ENCODE measurements at regions of chr6 and their contacts with region 1.

Region 1: DNA sequence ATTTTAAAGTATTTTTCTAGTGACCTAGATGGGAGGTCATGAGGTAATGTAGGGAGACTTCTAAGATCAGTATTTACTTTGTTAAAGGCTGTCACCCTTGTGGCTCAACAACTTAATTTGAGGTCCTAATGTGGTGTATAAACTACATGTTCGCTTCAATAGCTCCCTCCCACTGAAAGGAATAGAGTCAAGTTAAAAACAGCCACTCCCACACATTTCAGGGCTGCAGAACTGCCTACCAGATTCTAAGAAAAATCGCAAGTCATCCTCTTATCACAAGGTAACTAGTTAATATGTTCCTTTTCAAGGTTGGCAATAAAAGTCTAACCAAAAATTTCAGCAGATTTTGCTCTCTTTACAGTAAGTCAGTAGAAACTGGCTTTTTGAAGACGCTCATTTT is 15.1 kb downstream of the GSTA1 start:
- DNase-seq: no peak
- ATAC-seq: no peak
- H3K4me3 ChIP-seq: no peak overlapping the region
- H3K27ac ChIP-seq: no peak overlapping the region
- H3K4me1 ChIP-seq: no peaks in the 10 kb centered on the region
- H3K27me3 ChIP-seq: no peaks in the 10 kb centered on the region
- CTCF ChIP-seq: no peak
- EP300 ChIP-seq: no peak
- POLR2A ChIP-seq: no peak
- RAD21 ChIP-seq: no peak

Region 2: GRCh38 chr6:52829046-52829817 is 40.8 kb after region 1 on chr6:
- CTCF ChIA-PET with region 1: no interaction called
- POLR2A ChIA-PET with region 1: no interaction called
- RAD21 ChIA-PET with region 1: no interaction called
- SMC1A ChIA-PET with region 1: no interaction called
- in situ Hi-C with region 1: loop called (anchors 5 kb)
- intact Hi-C with region 1: loop called (anchors 1 kb)
- DNase-seq: no peak
- ATAC-seq: no peak
- H3K4me3 ChIP-seq: no peak overlapping the region
- H3K27ac ChIP-seq: no peak overlapping the region
- H3K4me1 ChIP-seq: no peaks in the 10 kb centered on the region
- H3K27me3 ChIP-seq: no peaks in the 10 kb centered on the region; a peak in 1 of 4 replicates
- CTCF ChIP-seq: no peak
- EP300 ChIP-seq: no peak
- POLR2A ChIP-seq: no peak
- RAD21 ChIP-seq: no peak

Region 3: DNA sequence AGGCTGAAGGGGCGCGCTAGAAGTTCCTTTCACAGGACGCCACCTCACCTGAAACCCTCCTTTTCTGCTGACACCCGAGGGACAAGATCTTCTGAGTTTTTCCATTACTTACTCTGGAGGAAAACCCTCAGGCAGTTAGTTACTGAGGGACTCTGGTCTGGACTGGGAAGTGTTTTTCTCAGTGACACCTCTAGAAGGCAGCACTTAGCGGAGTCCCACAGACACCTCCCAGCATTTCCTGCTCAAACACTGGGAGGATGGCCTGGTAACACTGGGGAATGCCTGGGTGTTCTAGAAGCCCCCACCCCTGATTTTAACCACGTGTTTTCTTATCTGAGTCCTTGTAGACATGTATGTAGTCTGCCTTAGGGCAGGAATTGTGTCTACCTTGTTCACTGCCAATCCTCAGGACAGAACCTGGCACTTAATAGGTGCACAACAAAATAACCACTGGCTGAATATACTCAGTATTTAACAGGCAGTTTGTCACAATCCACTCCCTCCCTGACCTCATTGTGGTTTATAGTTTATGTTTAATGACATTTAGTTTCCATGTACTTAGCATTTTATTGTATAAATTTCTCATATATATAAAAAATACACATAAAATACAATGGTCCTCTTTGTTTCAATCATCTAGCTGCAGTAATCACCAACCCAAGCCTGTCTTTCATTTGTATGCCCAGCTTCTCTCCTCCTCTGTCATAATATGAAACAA is 116.2 kb after region 1 on chr6:
- CTCF ChIA-PET with region 1: no interaction called
- POLR2A ChIA-PET with region 1: no interaction called
- RAD21 ChIA-PET with region 1: no interaction called
- SMC1A ChIA-PET with region 1: no interaction called
- in situ Hi-C with region 1: no loop called
- intact Hi-C with region 1: no loop called
- DNase-seq: no peak
- ATAC-seq: no peak
- H3K4me3 ChIP-seq: no peak overlapping the region
- H3K27ac ChIP-seq: no peak overlapping the region
- H3K4me1 ChIP-seq: no peaks in the 10 kb centered on the region
- H3K27me3 ChIP-seq: no peaks in the 10 kb centered on the region
- CTCF ChIP-seq: peak; percentile 5 to 30 (median 8); a peak in 2 of 6 replicates
- EP300 ChIP-seq: no peak
- POLR2A ChIP-seq: no peak
- RAD21 ChIP-seq: no peak

Measured in GM12878 (cell line).